Endothelial cell of umbilical vein (primary cell): ENCODE measurements at regions of chr11 and their contacts with region 1.

Region 1: DNA sequence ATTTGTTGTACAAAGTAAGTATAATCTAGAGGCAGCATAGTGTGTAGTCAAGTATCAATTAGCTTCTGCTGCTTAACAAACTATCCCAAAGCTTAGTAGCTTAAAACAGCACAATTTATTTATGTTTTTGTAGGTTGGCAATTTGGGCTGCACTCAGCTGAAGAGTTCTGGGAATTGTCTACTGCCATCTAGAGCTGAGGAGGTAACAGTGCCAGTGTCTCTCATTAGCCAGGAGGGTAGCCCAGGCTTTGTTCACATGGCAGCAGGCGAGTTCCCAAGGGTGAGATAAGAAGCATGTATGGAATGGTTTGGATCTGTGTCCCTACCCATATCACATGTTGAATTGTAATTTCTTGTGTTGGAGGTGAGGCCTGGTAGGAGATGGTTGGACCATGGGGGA is 45.8 kb upstream of the SLN start:
- DNase-seq: no peak
- H3K4me3 ChIP-seq: no peak overlapping the region
- H3K27ac ChIP-seq: no peak overlapping the region
- H3K4me1 ChIP-seq: no peaks in the 10 kb centered on the region
- H3K27me3 ChIP-seq: peaks cover 3 to 6% of the 10 kb centered on the region in 2 experiments
- CTCF ChIP-seq: no peak
- POLR2A ChIP-seq: no peak

Region 2: DNA sequence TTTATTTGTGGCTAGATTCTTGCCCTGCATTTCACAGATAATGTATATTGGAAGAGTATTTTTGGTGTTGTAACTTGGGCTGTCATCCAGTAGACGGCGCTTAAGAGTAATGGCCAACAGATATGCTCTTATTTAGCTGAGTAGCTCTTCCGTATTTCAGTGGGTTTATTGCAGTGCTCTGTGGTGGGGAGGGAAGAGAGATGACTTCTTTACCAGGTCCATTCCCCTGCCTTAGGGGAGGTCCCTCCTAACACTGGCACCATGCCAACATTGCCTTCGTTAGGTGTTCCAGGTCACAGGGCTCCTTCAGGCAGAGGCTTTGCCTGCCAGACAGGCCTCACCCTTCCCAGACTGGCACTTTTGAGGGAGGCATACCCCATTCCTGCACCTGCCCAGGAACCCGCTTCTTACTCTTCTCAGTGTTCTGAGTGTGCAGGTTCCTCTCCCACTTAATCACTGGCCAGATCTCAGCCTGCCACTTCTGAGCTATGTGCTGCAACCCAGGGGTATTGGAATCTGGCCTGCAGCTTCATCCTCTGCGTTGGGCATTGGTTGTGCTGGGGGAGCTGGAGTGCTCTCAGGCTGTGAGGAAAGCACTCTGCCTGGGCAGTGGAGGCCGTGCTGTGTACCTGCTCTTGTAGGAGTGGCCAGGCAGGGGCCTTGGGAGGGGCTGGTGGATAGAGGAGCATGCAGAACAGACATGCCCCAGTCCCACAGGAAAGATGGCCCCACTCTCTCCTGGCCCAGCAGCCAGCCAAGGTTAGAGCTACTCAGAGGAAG is 16.4 kb before region 1 on chr11:
- CTCF ChIA-PET with region 1: interaction called, 14 read pairs
- POLR2A ChIA-PET with region 1: no interaction called
- dilution Hi-C with region 1: no loop called
- intact Hi-C with region 1: no loop called
- DNase-seq: peak; percentile 48
- H3K4me3 ChIP-seq: no peak overlapping the region
- H3K27ac ChIP-seq: no peak overlapping the region
- H3K4me1 ChIP-seq: no peaks in the 10 kb centered on the region
- H3K27me3 ChIP-seq: peaks cover 5 to 20% of the 10 kb centered on the region in 2 experiments
- CTCF ChIP-seq: peak; percentile 63 to 73
- POLR2A ChIP-seq: no peak